A673 (cell line): ENCODE measurements at regions of chr10 and their contacts with region 1.

Region 1: DNA sequence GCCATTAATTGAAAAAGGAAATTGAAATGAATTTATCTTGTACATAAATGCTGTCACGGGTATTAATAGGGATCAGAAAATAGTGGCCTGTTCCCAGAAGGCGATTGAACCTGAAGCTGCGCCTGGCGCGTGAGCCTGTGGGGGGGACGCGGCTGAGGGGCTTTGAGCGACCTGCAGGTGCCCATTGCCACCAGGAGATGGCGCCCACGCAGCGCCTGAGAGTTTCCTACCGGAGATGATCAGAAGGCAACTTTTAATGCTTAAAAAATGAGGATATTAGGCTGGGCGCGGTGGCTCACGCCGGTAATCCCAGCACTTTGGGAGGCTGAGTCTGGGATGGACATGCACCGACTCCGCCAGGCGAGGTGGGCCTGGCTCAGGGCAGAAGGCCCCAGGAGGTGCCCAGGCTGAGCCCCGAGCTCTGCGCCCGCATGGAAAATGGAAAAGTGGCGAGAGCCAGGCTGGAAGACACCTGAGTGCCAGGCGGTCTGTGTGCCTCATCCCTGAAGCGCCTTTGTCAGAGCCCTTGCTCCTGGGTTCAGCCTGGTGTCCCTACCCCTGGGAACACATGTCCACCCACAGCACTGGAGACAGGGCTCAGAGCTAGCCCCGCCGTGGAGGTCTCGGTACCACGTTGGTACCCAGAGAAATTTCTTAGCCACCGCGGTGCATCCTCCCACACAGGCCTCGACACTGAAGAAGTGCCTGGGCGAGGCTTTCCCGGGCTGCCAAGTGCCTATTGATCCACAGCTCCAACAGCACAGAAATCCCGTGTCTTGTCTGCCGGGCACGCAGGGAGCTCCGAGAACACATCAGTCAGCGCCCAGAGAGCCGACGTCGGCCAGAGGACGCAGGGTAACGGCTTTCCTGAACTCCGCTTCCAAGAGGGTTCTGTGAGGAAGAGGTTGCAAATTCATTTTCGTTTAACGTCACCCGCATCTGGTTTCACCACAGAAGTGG is 117.4 kb downstream of the INPP5A start:
- DNase-seq: peak; percentile 71
- H3K4me3 ChIP-seq: no peak overlapping the region
- H3K27ac ChIP-seq: no peak overlapping the region
- H3K4me1 ChIP-seq: no peaks in the 10 kb centered on the region
- H3K27me3 ChIP-seq: no peaks in the 10 kb centered on the region
- CTCF ChIP-seq: peak; percentile 90

Region 2: GRCh38 chr10:132836832-132837540 is 182.0 kb after region 1 on chr10:
- CTCF ChIA-PET with region 1: interaction called, 3 read pairs
- POLR2A ChIA-PET with region 1: no interaction called
- intact Hi-C with region 1: loop called (anchors 10 kb)
- DNase-seq: peak; percentile 45
- H3K4me3 ChIP-seq: no peak overlapping the region
- H3K27ac ChIP-seq: no peak overlapping the region
- H3K4me1 ChIP-seq: no peaks in the 10 kb centered on the region
- H3K27me3 ChIP-seq: peaks cover 44% of the 10 kb centered on the region
- CTCF ChIP-seq: peak; percentile 93

Region 3: DNA sequence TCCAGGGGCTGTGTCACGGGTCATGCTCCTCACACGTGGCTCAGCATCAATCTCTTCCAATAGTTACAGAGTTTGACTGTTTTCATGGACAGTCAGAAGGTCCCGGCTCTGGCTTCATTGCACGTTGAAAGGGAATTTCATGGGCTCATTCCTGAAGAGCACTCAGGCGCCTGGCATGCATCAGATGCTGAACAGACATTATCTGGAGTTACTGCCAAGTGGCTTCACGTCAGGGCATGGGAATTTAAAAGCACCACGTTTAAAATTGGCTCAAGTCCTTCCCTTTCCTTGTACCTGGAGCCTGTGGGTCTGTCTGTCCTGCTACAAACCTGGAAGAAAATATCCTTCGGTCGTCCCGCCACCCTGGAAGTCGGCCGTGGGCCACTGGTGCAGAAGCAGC is 237.0 kb after region 1 on chr10:
- CTCF ChIA-PET with region 1: no interaction called
- POLR2A ChIA-PET with region 1: no interaction called
- intact Hi-C with region 1: loop called (anchors 10 kb)
- DNase-seq: no peak
- H3K4me3 ChIP-seq: no peak overlapping the region
- H3K27ac ChIP-seq: no peak overlapping the region
- H3K4me1 ChIP-seq: no peaks in the 10 kb centered on the region
- H3K27me3 ChIP-seq: peaks cover 71% of the 10 kb centered on the region
- CTCF ChIP-seq: no peak

Region 4: GRCh38 chr10:132904181-132904819 is 249.3 kb after region 1 on chr10:
- CTCF ChIA-PET with region 1: no interaction called
- POLR2A ChIA-PET with region 1: interaction called, 11 read pairs
- intact Hi-C with region 1: loop called (anchors 10 kb)
- DNase-seq: peak; percentile 64
- H3K4me3 ChIP-seq: no peak overlapping the region
- H3K27ac ChIP-seq: no peak overlapping the region
- H3K4me1 ChIP-seq: no peaks in the 10 kb centered on the region
- H3K27me3 ChIP-seq: peaks cover 3% of the 10 kb centered on the region
- CTCF ChIP-seq: peak; percentile 88